H1 (cell line): ENCODE measurements at regions of chr1 and their contacts with region 1.

Region 1: DNA sequence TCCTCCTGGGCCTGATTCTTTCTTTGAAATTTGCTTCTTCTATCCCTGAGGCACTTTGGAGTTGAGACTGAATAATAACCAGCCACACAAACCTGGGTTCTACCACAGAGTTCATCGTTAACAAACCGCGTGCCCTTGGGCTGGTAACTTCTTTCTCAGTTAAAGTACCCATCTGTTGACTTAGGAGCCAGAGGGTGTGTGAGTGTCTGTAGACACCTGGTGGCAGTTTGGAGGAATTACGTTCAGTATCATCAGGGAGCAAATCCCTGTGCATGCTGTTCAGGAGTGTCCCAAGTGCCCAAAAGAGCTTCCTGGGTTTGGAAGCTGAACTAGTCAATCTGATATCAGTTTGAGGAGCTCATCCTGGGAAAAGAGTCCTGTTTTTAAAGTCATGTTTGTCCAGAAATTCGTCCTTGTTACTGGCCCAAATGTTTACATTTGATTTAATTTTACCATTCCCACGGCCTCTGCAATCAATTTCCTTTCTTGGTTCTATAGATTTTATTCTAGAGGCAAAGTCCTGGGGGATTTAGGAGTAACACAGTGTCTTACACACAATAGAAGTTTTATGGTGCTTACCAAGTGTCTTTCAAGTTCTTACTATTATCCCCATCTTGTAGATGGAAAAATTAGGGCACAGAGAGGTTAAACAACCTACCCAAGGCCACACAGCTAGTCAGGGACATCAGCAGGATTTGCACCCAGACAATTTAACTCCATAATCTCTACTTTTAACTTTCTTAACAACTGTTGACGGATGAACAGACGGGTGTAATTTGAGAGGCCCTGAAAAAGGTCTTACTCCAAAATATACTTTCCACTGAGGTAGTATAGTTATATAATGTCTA is 26.7 kb upstream of the RPTN start:
- DNase-seq: peak in 1 of 2 experiments; percentile 42
- H3K4me3 ChIP-seq: no peak overlapping the region
- H3K27ac ChIP-seq: no peak overlapping the region
- H3K4me1 ChIP-seq: no peaks in the 10 kb centered on the region
- H3K27me3 ChIP-seq: 0 out of 7 replicates have a peak, but pooled peaks cover 0 to 2% (median 0%) of the 10 kb centered on the region in 4 experiments
- CTCF ChIP-seq: peak; percentile 46 to 77 (median 74)
- EP300 ChIP-seq: no peak
- POLR2A ChIP-seq: no peak
- RAD21 ChIP-seq: peak; percentile 75 to 83

Region 2: DNA sequence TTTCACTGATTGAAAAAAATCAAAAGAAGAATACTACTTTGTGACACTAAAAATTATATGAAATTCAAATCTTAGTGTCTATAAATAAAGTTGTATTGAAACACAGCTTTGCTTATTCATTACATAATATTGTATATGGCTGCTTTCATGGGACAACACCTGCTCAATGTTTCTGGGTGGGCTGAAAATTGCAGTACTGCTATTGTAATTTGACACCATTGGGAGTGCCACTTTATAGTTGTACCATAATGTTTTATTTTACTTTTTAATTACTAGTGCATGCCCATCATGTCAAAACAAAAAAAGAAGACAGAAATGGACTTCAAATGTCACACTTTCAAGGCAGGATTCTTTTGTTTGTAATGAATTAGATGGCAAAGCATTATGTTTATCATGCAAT is 10.2 kb before region 1 on chr1:
- CTCF ChIA-PET with region 1: interaction called, 10 read pairs
- POLR2A ChIA-PET with region 1: no interaction called
- DNase-seq: no peak
- H3K4me3 ChIP-seq: no peak overlapping the region
- H3K27ac ChIP-seq: no peak overlapping the region
- H3K4me1 ChIP-seq: no peaks in the 10 kb centered on the region
- H3K27me3 ChIP-seq: no peaks in the 10 kb centered on the region
- CTCF ChIP-seq: no peak
- EP300 ChIP-seq: no peak
- POLR2A ChIP-seq: no peak
- RAD21 ChIP-seq: no peak